ENCODE measurements at regions of chr1 and their contacts with region 1.

Region 1: GRCh38 chr1:40338745-40339424 is 21.8 kb upstream of the COL9A2 start:
- DNase-seq: peak; percentile 70 to 94 (median 82)
- H3K4me3 ChIP-seq: no peak overlapping the region
- H3K27ac ChIP-seq: peak overlapping the region in 2 of 5 donors; percentile 11 to 57
- H3K4me1 ChIP-seq: peaks cover 0 to 3% of the 10 kb centered on the region in 2 donors
- H3K27me3 ChIP-seq: no peaks in the 10 kb centered on the region
- CTCF ChIP-seq: peak; percentile 95 to 99 (median 98)
- POLR2A ChIP-seq: no peak

Region 2: GRCh38 chr1:40153073-40153770 is 185.7 kb before region 1 on chr1:
- intact Hi-C with region 1: loop called (anchors 5 kb)
- DNase-seq: peak in 2 of 7 donors; percentile 27 to 44
- H3K4me3 ChIP-seq: no peak overlapping the region
- H3K27ac ChIP-seq: no peak overlapping the region
- H3K4me1 ChIP-seq: no peaks in the 10 kb centered on the region
- H3K27me3 ChIP-seq: no peaks in the 10 kb centered on the region
- CTCF ChIP-seq: peak; percentile 33 to 76 (median 66)
- POLR2A ChIP-seq: no peak

Region 3: GRCh38 chr1:40281853-40282252 is 57.0 kb before region 1 on chr1:
- intact Hi-C with region 1: no loop called
- DNase-seq: no peak
- H3K4me3 ChIP-seq: no peak overlapping the region
- H3K27ac ChIP-seq: no peak overlapping the region
- H3K4me1 ChIP-seq: peaks cover 0 to 5% of the 10 kb centered on the region in 2 donors
- H3K27me3 ChIP-seq: no peaks in the 10 kb centered on the region
- CTCF ChIP-seq: no peak
- POLR2A ChIP-seq: no peak

Measured in adrenal gland (tissue), 19 donors.